Endothelial cell of umbilical vein (primary cell): ENCODE measurements at regions of chr1 and their contacts with region 1.

Region 1: GRCh38 chr1:23196639-23197328 is 20.5 kb downstream of the HTR1D start:
- DNase-seq: peak; percentile 84
- H3K4me3 ChIP-seq: no peak overlapping the region
- H3K27ac ChIP-seq: peak overlapping the region; percentile 94
- H3K4me1 ChIP-seq: peaks cover 27% of the 10 kb centered on the region
- H3K27me3 ChIP-seq: no peaks in the 10 kb centered on the region
- CTCF ChIP-seq: no peak
- POLR2A ChIP-seq: peak; percentile 61

Region 2: DNA sequence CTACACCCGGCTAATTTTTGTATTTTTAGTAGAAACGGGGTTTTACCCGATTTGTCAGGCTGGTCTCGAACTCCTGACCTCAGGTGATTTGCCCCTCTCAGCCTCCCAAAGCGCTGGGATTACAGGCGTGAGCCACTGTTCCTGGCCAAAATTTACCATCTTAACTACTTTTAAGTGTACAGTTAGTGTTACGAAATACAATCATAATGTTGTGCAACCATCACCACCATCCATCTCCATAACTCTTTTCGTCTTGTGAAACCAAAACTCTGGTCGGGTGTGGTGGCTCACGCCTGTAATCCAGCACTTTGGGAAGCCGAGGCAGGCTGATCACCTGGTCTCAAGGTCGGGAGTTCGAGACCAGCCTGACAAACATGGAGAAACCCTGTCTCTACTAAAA is 759.2 kb before region 1 on chr1:
- CTCF ChIA-PET with region 1: no interaction called
- POLR2A ChIA-PET with region 1: no interaction called
- dilution Hi-C with region 1: no loop called
- intact Hi-C with region 1: no loop called
- DNase-seq: no peak
- H3K4me3 ChIP-seq: no peak overlapping the region
- H3K27ac ChIP-seq: no peak overlapping the region
- H3K4me1 ChIP-seq: no peaks in the 10 kb centered on the region
- H3K27me3 ChIP-seq: peaks cover 0 to 6% of the 10 kb centered on the region in 2 experiments
- CTCF ChIP-seq: no peak
- POLR2A ChIP-seq: no peak

Region 3: DNA sequence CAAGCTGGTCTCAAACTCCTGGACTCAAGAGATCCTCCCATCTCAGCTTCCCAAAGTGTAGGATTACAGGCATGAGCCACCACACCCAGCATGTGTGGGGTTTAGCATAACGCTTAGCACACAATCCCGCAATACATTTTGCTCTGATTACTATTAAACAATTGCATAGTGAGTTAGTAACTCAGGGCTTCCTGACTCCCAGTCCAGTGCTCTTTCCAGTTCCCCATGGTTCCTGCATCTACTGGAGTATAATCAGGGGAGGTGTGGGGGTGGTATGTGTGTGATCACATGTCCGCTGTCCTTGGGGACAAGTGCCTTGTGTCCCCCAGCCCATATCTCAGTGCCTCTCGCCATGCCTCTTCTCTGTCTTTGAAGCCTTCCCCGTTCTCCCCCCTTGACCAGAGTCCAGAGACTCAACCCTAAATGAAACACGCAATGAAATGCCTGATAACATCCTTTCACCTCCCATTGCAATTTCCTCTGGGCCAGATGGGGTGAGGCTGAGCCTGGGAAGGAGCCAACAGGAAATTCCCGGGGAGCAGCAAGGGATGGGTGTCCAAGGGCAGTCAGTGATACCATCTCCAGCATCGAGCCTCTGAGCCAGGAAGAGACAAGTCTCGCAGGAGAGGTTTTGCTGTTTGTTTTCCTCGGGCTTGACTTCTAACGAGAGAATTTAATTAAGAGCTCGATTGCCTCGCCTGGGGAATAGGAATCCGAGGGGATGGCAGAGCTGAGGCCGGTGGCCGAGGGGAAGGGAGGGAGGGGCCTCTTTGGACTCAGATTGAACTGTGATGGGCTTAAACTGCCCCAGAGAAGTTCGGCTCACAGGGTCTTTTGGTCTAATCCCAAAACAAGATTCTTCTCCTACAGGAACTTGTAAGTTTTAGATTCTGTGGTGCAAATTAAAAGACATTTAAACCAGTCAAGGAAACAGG is 28.2 kb after region 1 on chr1:
- CTCF ChIA-PET with region 1: no interaction called
- POLR2A ChIA-PET with region 1: no interaction called
- dilution Hi-C with region 1: no loop called
- intact Hi-C with region 1: loop called (anchors 2 kb)
- DNase-seq: peak; percentile 78
- H3K4me3 ChIP-seq: no peak overlapping the region
- H3K27ac ChIP-seq: peak overlapping the region; percentile 46
- H3K4me1 ChIP-seq: peaks cover 17% of the 10 kb centered on the region
- H3K27me3 ChIP-seq: no peaks in the 10 kb centered on the region
- CTCF ChIP-seq: no peak
- POLR2A ChIP-seq: no peak

Region 4: GRCh38 chr1:23278717-23279116 is 81.9 kb after region 1 on chr1:
- CTCF ChIA-PET with region 1: no interaction called
- POLR2A ChIA-PET with region 1: no interaction called
- dilution Hi-C with region 1: no loop called
- intact Hi-C with region 1: loop called (anchors 5 kb)
- DNase-seq: no peak
- H3K4me3 ChIP-seq: no peak overlapping the region
- H3K27ac ChIP-seq: no peak overlapping the region
- H3K4me1 ChIP-seq: peaks cover 16% of the 10 kb centered on the region
- H3K27me3 ChIP-seq: no peaks in the 10 kb centered on the region
- CTCF ChIP-seq: no peak
- POLR2A ChIP-seq: peak; percentile 21